ENCODE measurements at regions of chr1 and their contacts with region 1.

Region 1: GRCh38 chr1:26666855-26667254 is 29.0 kb upstream of the ARID1A start:
- DNase-seq: peak; percentile 49
- H3K4me3 ChIP-seq: no peak overlapping the region
- H3K27ac ChIP-seq: no peak overlapping the region
- H3K4me1 ChIP-seq: no peaks in the 10 kb centered on the region
- H3K27me3 ChIP-seq: no peaks in the 10 kb centered on the region
- CTCF ChIP-seq: no peak

Region 2: GRCh38 chr1:26279456-26280332 is 387.2 kb before region 1 on chr1 and contains the start of gene SH3BGRL3:
- CTCF ChIA-PET with region 1: no interaction called
- dilution Hi-C with region 1: no loop called
- in situ Hi-C with region 1: no loop called
- intact Hi-C with region 1: no loop called
- DNase-seq: peak; percentile 86
- H3K4me3 ChIP-seq: peak within 1 kb of the TSS; percentile 70 to 88 (median 73)
- H3K27ac ChIP-seq: peak within 1 kb of the TSS; percentile 86
- H3K4me1 ChIP-seq: peaks cover 90% of the 10 kb centered on the region
- H3K27me3 ChIP-seq: no peaks in the 10 kb centered on the region
- CTCF ChIP-seq: peak; percentile 40 to 69
- total RNA-seq, gene SH3BGRL3: 15.8 to 497 TPM

Region 3: DNA sequence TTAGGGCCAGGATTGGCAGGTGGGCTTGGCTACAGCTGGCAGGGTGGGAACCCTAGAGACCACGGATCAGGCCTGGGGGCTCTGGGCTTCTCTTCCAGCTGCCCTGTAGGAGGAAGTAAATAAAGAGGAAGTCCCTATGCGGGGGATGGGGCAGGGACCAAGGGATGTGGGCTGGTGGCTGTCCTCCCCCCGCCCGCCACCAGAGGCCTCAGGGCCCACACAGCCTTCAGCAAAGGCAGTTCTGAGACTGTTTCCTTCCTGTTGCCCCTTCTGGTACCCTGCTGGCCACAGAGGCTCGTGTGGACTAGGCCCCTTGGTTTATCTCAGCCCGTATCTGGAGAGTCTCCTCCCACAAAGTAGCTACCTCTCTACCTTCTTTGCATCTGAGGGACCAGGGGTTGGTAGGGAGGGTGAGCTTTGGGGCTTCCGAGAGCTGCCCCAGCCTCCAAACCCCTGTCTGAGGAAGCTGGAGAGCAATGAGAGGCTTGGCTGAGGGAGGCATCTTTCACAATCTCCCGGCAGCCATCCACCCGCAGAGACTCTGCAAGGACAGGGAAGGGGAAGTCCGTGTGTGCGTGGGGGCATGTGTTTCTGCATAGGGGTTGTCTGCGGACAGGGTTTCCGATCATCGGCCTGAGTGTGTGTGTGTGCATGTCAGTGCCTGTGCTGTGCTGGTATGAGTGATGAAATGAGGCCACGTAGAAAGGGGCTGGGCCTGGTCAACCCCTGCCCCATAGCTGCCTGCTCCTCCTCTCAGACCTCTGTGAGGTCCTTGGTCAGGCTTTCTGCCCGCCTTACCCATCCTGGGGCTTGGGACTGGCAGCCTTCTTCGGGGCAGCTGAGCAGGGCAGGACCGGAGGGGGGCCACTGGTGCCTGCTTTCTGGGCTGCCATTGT is 124.8 kb before region 1 on chr1:
- CTCF ChIA-PET with region 1: no interaction called
- dilution Hi-C with region 1: no loop called
- in situ Hi-C with region 1: no loop called
- intact Hi-C with region 1: no loop called
- DNase-seq: peak; percentile 92
- H3K4me3 ChIP-seq: no peak overlapping the region
- H3K27ac ChIP-seq: peak overlapping the region; percentile 49
- H3K4me1 ChIP-seq: peaks cover 60% of the 10 kb centered on the region
- H3K27me3 ChIP-seq: no peaks in the 10 kb centered on the region
- CTCF ChIP-seq: peak; percentile 24 to 31

Region 4: GRCh38 chr1:26677306-26678115 is 10.7 kb after region 1 on chr1:
- CTCF ChIA-PET with region 1: interaction called, 17 read pairs
- dilution Hi-C with region 1: no loop called
- in situ Hi-C with region 1: no loop called
- intact Hi-C with region 1: no loop called
- DNase-seq: peak; percentile 91
- H3K4me3 ChIP-seq: no peak overlapping the region
- H3K27ac ChIP-seq: no peak overlapping the region
- H3K4me1 ChIP-seq: peaks cover 4% of the 10 kb centered on the region
- H3K27me3 ChIP-seq: no peaks in the 10 kb centered on the region
- CTCF ChIP-seq: peak; percentile 77 to 90